GM12878 (cell line): ENCODE measurements at regions of chr2 and their contacts with region 1.

Region 1: GRCh38 chr2:74250189-74250631 is 51.8 kb downstream of the MTHFD2 start:
- DNase-seq: peak; percentile 17
- ATAC-seq: peak; percentile 95
- H3K4me3 ChIP-seq: no peak overlapping the region
- H3K27ac ChIP-seq: no peak overlapping the region
- H3K4me1 ChIP-seq: no peaks in the 10 kb centered on the region
- H3K27me3 ChIP-seq: no peaks in the 10 kb centered on the region
- CTCF ChIP-seq: peak; percentile 78 to 87 (median 84)
- EP300 ChIP-seq: no peak
- POLR2A ChIP-seq: no peak
- RAD21 ChIP-seq: peak; percentile 82

Region 2: DNA sequence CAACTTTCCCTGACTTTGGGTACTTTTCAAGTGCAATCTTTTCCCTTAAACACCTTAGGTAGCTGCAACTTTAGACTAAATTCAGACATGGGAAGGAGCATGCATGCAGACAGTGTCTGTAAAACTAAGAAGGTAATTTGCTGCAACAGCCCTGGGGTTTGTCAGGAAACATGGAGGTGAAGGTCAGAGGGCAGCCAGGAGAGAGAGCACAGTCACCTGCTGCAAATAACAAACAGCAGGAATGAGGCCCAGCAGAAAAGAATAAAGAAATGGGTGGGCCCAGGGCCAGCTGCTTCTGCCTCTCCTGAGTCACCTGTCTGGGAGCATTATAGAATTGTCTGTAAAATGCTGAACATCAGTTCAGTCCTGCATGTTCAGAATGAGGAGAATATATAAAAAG is 16.6 kb before region 1 on chr2:
- CTCF ChIA-PET with region 1: interaction called, 32 read pairs
- POLR2A ChIA-PET with region 1: interaction called, 5 read pairs
- RAD21 ChIA-PET with region 1: no interaction called
- SMC1A ChIA-PET with region 1: interaction called, 4 read pairs
- in situ Hi-C with region 1: no loop called
- intact Hi-C with region 1: no loop called
- DNase-seq: no peak
- ATAC-seq: no peak
- H3K4me3 ChIP-seq: no peak overlapping the region
- H3K27ac ChIP-seq: no peak overlapping the region
- H3K4me1 ChIP-seq: no peaks in the 10 kb centered on the region
- H3K27me3 ChIP-seq: no peaks in the 10 kb centered on the region
- CTCF ChIP-seq: no peak
- EP300 ChIP-seq: no peak
- POLR2A ChIP-seq: no peak
- RAD21 ChIP-seq: no peak

Region 3: GRCh38 chr2:74261204-74261864 is 11.1 kb after region 1 on chr2:
- CTCF ChIA-PET with region 1: interaction called, 20 read pairs
- POLR2A ChIA-PET with region 1: no interaction called
- RAD21 ChIA-PET with region 1: no interaction called
- SMC1A ChIA-PET with region 1: interaction called, 3 read pairs
- in situ Hi-C with region 1: no loop called
- intact Hi-C with region 1: no loop called
- DNase-seq: no peak
- ATAC-seq: no peak
- H3K4me3 ChIP-seq: no peak overlapping the region
- H3K27ac ChIP-seq: no peak overlapping the region
- H3K4me1 ChIP-seq: no peaks in the 10 kb centered on the region
- H3K27me3 ChIP-seq: no peaks in the 10 kb centered on the region
- CTCF ChIP-seq: peak in 1 of 3 experiments; percentile 26; a peak in 1 of 6 replicates
- EP300 ChIP-seq: no peak
- POLR2A ChIP-seq: no peak
- RAD21 ChIP-seq: 0 out of 2 replicates have a peak, but pooled peaks have one; percentile 13

Region 4: DNA sequence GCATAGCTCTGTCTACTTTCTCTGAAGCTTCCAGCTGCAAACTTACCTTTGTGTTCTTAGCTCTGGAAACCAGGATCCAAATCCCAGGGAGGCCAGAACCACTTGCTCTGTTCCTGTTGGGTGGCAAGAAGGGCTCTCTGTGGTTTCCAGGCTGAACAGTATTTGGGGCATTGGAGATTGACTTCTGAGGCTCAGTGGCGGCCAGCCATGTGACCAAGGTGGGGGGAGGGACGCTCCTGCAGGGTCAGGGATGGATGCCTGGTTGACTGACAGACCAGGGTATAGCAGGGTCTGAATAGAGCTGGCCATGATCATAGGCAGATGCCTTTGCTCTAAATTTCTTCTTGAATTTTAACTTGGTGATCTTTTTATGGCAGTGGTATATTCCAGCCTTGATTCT is 77.9 kb after region 1 on chr2:
- CTCF ChIA-PET with region 1: interaction called, 166 read pairs
- POLR2A ChIA-PET with region 1: no interaction called
- RAD21 ChIA-PET with region 1: interaction called, 12 read pairs
- SMC1A ChIA-PET with region 1: interaction called, 5 read pairs
- in situ Hi-C with region 1: no loop called
- intact Hi-C with region 1: no loop called
- DNase-seq: no peak
- ATAC-seq: no peak
- H3K4me3 ChIP-seq: no peak overlapping the region
- H3K27ac ChIP-seq: no peak overlapping the region
- H3K4me1 ChIP-seq: no peaks in the 10 kb centered on the region
- H3K27me3 ChIP-seq: no peaks in the 10 kb centered on the region
- CTCF ChIP-seq: no peak
- EP300 ChIP-seq: no peak
- POLR2A ChIP-seq: no peak
- RAD21 ChIP-seq: no peak

Region 5: GRCh38 chr2:74345272-74345943 is 95.2 kb after region 1 on chr2:
- CTCF ChIA-PET with region 1: interaction called, 12 read pairs
- POLR2A ChIA-PET with region 1: no interaction called
- RAD21 ChIA-PET with region 1: interaction called, 3 read pairs
- SMC1A ChIA-PET with region 1: interaction called, 4 read pairs
- in situ Hi-C with region 1: no loop called
- intact Hi-C with region 1: no loop called
- DNase-seq: no peak
- ATAC-seq: peak; percentile 65
- H3K4me3 ChIP-seq: no peak overlapping the region
- H3K27ac ChIP-seq: no peak overlapping the region
- H3K4me1 ChIP-seq: peaks cover 8% of the 10 kb centered on the region; the same call in 1 of the 2 replicates
- H3K27me3 ChIP-seq: no peaks in the 10 kb centered on the region
- CTCF ChIP-seq: no peak
- EP300 ChIP-seq: no peak
- POLR2A ChIP-seq: no peak
- RAD21 ChIP-seq: no peak

Region 6: DNA sequence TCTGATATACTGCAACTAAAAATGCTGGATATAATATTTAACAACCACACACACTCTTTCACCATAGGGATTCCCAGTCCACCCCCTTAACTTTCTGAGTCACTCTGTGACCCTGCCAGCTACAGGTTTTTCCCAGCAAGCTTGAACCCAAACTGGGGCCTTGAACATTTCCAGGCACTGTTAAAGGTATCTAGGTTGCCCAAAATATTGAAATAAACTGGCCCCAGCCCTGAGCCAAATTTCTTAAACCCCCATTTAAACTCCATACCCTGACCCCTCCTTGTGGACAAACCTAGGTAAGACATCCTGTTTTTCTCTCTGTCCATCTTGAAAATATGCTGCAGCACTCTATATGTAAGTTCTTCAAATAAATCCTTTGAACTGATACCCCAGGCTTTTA is 149.6 kb after region 1 on chr2:
- CTCF ChIA-PET with region 1: interaction called, 23 read pairs
- POLR2A ChIA-PET with region 1: no interaction called
- RAD21 ChIA-PET with region 1: interaction called, 4 read pairs
- SMC1A ChIA-PET with region 1: interaction called, 5 read pairs
- in situ Hi-C with region 1: no loop called
- intact Hi-C with region 1: loop called (anchors 5 kb)
- DNase-seq: no peak
- ATAC-seq: peak; percentile 92
- H3K4me3 ChIP-seq: no peak overlapping the region
- H3K27ac ChIP-seq: no peak overlapping the region
- H3K4me1 ChIP-seq: no peaks in the 10 kb centered on the region
- H3K27me3 ChIP-seq: no peaks in the 10 kb centered on the region
- CTCF ChIP-seq: peak; percentile 49 to 67 (median 60)
- EP300 ChIP-seq: no peak
- POLR2A ChIP-seq: no peak
- RAD21 ChIP-seq: peak; percentile 74

Region 7: GRCh38 chr2:74498500-74499266 is 248.5 kb after region 1 on chr2:
- CTCF ChIA-PET with region 1: no interaction called
- POLR2A ChIA-PET with region 1: no interaction called
- RAD21 ChIA-PET with region 1: no interaction called
- SMC1A ChIA-PET with region 1: no interaction called
- in situ Hi-C with region 1: no loop called
- intact Hi-C with region 1: no loop called
- DNase-seq: no peak
- ATAC-seq: peak; percentile 3; the same call in 1 of the 3 replicates
- H3K4me3 ChIP-seq: peak overlapping the region; percentile 57; the same call in 1 of the 2 replicates
- H3K27ac ChIP-seq: no peak overlapping the region
- H3K4me1 ChIP-seq: peaks cover 15% of the 10 kb centered on the region
- H3K27me3 ChIP-seq: peaks cover 15 to 25% of the 10 kb centered on the region in 2 experiments; a peak in 3 of 4 replicates
- CTCF ChIP-seq: no peak
- EP300 ChIP-seq: no peak
- POLR2A ChIP-seq: peak; percentile 43; the same call in 1 of the 2 replicates
- RAD21 ChIP-seq: no peak

Region 8: DNA sequence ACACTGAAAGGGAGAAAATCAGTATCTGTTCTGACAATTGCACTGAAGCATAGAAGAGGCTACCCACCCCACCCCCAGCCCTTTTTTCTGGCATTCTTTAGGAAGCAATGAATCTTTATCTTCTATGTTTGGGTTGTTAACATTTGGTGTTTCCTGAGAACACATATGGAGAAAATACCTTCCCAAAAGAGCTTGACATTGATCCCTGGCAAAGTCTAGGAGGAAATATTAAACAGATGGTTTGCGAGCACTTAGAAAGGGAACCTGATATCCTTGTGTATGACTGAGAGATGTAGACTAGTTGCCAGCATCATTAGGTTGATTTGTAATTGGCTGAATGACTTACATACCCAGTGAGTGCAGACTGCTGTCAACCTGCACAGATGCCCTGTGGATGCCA is 347.2 kb after region 1 on chr2:
- CTCF ChIA-PET with region 1: no interaction called
- POLR2A ChIA-PET with region 1: no interaction called
- RAD21 ChIA-PET with region 1: no interaction called
- SMC1A ChIA-PET with region 1: no interaction called
- in situ Hi-C with region 1: loop called (anchors 10 kb)
- intact Hi-C with region 1: no loop called
- DNase-seq: no peak
- ATAC-seq: no peak
- H3K4me3 ChIP-seq: no peak overlapping the region
- H3K27ac ChIP-seq: no peak overlapping the region
- H3K4me1 ChIP-seq: no peaks in the 10 kb centered on the region
- H3K27me3 ChIP-seq: no peaks in the 10 kb centered on the region; a peak in 2 of 4 replicates
- CTCF ChIP-seq: no peak
- EP300 ChIP-seq: no peak
- POLR2A ChIP-seq: no peak
- RAD21 ChIP-seq: no peak